ENCODE measurements at regions of chr3 and their contacts with region 1.

Region 1: DNA sequence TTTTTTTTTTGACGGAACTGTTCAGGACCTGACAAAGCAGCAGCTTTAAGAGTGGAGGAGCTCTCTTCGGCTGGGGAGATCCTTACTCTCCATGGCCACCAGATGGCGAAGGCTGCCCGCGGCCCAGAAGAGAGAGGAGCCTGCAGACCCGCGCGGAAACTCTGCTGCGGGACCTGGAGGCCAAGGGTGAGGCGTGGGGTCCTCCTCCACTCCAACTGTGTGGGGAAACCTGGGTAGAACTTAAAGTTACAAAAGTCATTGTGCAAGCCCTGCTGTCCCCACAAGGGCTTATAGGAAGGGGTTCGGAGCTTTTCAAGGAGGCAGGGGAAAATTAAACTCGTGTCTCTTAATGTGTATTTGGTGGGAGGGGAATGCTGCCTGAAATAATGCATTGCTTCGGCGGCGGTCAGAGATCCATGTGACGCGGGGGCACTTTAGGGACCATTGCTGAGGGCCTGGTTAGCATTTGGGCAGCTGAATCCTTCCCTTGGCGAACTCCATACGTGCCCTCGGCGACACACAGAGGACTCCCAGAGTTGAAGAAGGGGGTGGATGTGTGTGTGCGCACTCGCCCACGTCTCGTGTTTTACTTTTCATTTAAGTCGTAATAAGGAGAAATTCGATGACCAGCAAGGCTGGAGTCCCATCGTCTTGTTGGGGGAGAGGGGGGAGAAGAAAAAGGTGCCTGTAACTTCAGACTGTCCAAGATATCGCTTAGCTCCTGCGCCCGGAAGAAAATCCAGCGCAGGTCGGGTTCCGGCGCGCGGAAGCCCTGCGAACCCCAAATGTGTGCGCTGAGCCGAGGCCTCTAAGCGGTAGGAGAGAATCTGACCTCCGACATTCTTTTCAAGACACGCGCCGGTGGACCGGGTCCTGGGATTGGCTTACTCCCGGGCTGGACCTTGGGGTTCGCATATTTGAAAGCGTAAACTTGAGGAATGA is 9.7 kb downstream of the EOMES start:
- DNase-seq: peak; percentile 78 to 90 (median 89)
- ATAC-seq: peak; percentile 96 to 98
- H3K4me3 ChIP-seq: peak overlapping the region; percentile 94
- H3K27ac ChIP-seq: no peak overlapping the region
- H3K4me1 ChIP-seq: no peaks in the 10 kb centered on the region
- H3K27me3 ChIP-seq: no peaks in the 10 kb centered on the region

Region 2: GRCh38 chr3:27632431-27633223 is 79.8 kb before region 1 on chr3:
- intact Hi-C with region 1: no loop called
- DNase-seq: peak; percentile 65 to 83 (median 82)
- ATAC-seq: peak; percentile 90 to 91
- H3K4me3 ChIP-seq: peak overlapping the region; percentile 60
- H3K27ac ChIP-seq: peak overlapping the region; percentile 51
- H3K4me1 ChIP-seq: peaks cover 1% of the 10 kb centered on the region
- H3K27me3 ChIP-seq: no peaks in the 10 kb centered on the region

Region 3: GRCh38 chr3:27914199-27914598 is 201.8 kb after region 1 on chr3:
- intact Hi-C with region 1: no loop called
- DNase-seq: no peak
- ATAC-seq: no peak
- H3K4me3 ChIP-seq: no peak overlapping the region
- H3K27ac ChIP-seq: no peak overlapping the region
- H3K4me1 ChIP-seq: no peaks in the 10 kb centered on the region
- H3K27me3 ChIP-seq: no peaks in the 10 kb centered on the region

Region 4: DNA sequence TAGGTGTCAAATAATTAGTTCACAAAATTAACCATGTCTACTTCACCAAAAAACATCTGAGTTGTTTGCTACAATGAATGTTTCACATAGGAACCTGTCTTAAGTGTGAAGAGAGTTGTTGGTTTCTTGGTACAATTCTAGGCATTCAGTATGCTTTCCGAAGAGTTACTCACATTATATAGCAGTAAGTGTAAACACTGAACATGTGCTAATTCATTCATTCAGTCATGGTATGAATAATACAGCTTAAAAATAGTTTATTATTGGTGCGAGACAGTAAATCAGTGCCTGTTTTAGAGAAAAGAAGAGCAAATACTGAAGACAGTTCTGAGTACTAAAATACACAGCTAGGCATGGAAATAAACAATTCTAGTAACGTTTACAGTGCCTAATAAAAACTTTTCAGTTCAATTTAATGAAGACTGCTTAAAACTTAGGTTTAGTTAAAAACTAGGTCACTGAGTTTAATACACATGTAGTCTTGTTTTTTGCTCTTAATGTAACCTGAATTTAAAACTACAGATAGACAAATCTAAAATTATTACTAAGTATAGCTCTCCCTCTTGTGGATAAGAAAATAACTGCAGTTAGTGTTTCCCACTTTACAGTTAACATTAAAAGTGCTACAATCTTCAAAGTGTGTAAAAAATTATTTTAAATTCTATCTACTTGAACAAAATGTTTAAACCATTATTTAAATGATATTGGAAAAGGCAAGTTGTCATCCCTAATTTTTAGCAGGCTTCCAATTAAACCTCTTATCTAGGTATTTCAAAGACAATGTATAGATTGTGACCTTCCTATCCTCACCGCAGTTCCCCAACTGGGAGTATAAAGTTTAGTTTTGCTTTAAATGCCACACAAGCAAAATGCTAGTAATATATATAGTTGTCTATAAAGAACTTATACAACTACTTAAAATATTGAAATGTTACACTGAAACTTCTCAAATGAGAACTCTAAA is 616.1 kb after region 1 on chr3:
- intact Hi-C with region 1: loop called (anchors 5 to 10 kb)
- DNase-seq: no peak
- ATAC-seq: no peak
- H3K4me3 ChIP-seq: no peak overlapping the region
- H3K27ac ChIP-seq: no peak overlapping the region
- H3K4me1 ChIP-seq: no peaks in the 10 kb centered on the region
- H3K27me3 ChIP-seq: no peaks in the 10 kb centered on the region

Region 5: DNA sequence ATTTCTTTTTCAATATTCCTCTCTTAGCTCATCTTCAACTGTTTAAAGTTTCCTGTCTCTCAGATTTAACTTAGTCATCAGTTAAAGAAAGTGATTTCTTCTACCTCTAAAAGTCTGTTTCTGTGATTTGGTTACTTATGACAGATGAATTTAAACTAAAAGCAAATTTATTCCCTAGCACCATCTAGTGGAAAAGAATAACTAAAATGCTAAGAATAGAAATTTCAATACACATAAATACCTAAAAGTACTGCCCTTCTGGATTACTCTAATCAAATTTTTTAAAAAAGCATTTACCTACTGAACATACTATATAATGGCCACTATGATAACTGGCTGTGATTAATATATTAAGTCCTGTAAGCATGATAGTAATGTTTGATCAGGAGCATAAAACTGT is 622.1 kb after region 1 on chr3:
- intact Hi-C with region 1: loop called (anchors 5 to 10 kb)
- DNase-seq: no peak
- ATAC-seq: no peak
- H3K4me3 ChIP-seq: no peak overlapping the region
- H3K27ac ChIP-seq: no peak overlapping the region
- H3K4me1 ChIP-seq: no peaks in the 10 kb centered on the region
- H3K27me3 ChIP-seq: no peaks in the 10 kb centered on the region

Measured in right cardiac atrium (tissue), 5 donors.